WTC11 (cell line): ENCODE measurements at regions of chr9 and their contacts with region 1.

Region 1: DNA sequence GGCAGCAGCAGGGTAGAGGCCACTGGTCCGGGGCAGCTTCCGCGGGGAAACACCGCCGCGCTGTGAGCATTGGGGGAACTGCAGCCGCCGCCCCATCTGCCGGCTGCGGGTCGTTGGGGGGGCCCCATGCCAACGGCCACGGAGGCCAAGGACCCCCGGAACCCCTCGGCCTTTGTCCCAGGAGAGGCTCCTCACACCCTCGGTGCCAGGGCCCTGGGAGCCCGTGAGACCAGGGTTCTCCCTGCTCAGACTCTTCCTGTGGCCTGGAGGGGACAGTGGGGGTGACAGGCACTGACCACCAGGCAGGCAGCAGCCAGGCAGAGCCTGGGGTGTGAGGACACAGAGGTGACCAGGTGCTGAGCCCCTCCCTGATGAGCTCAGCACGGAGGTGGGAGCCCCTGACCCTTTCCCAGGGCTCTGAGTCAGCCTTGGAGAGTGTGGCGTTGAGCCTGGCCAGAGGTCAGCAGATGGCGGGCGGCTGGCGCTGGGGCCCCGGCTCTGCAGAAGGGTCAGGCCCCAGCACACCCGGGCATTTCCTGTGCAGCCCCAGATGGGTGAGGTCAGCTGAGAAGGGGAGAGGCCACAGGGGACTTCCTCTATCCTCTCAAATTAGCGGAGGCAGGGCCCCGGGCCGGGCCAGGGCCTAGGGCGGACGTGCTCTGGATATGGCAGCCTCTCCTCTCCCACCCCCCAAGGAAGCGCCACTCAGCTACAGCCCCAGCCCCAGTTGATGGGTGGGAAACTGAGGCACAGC is 17.9 kb upstream of the EGFL7 start:
- DNase-seq: peak; percentile 82
- ATAC-seq: peak; percentile 87
- H3K4me3 Mint-ChIP-seq: no peak overlapping the region
- H3K27ac Mint-ChIP-seq: no peak overlapping the region
- H3K4me1 Mint-ChIP-seq: no peaks in the 10 kb centered on the region
- H3K27me3 Mint-ChIP-seq: 0 out of 2 replicates have a peak, but pooled peaks cover 6% of the 10 kb centered on the region
- CTCF ChIP-seq: peak; percentile 81

Region 2: GRCh38 chr9:136482793-136483588 is 161.8 kb before region 1 on chr9 and contains the start of gene SEC16A:
- CTCF ChIA-PET with region 1: interaction called, 21 read pairs
- POLR2A ChIA-PET with region 1: no interaction called
- DNase-seq: peak; percentile 99
- ATAC-seq: peak; percentile 78
- H3K4me3 Mint-ChIP-seq: peak within 1 kb of the TSS; percentile 87
- H3K27ac Mint-ChIP-seq: peak within 1 kb of the TSS; percentile 98
- H3K4me1 Mint-ChIP-seq: peaks cover 15% of the 10 kb centered on the region
- H3K27me3 Mint-ChIP-seq: no peaks in the 10 kb centered on the region
- CTCF ChIP-seq: no peak
- total RNA-seq, gene SEC16A: 52.1 to 70.9 TPM (median 52.3 TPM) in 3 replicates

Region 3: GRCh38 chr9:136488247-136489214 is 156.2 kb before region 1 on chr9:
- CTCF ChIA-PET with region 1: interaction called, 21 read pairs
- POLR2A ChIA-PET with region 1: no interaction called
- DNase-seq: peak; percentile 89
- ATAC-seq: peak; percentile 53
- H3K4me3 Mint-ChIP-seq: no peak overlapping the region
- H3K27ac Mint-ChIP-seq: no peak overlapping the region
- H3K4me1 Mint-ChIP-seq: peaks cover 4% of the 10 kb centered on the region
- H3K27me3 Mint-ChIP-seq: no peaks in the 10 kb centered on the region
- CTCF ChIP-seq: peak; percentile 95

Region 4: GRCh38 chr9:136631038-136632000 is 13.5 kb before region 1 on chr9:
- CTCF ChIA-PET with region 1: interaction called, 11 read pairs
- POLR2A ChIA-PET with region 1: no interaction called
- DNase-seq: peak; percentile 78
- ATAC-seq: peak; percentile 57
- H3K4me3 Mint-ChIP-seq: no peak overlapping the region
- H3K27ac Mint-ChIP-seq: no peak overlapping the region
- H3K4me1 Mint-ChIP-seq: no peaks in the 10 kb centered on the region
- H3K27me3 Mint-ChIP-seq: no peaks in the 10 kb centered on the region
- CTCF ChIP-seq: 0 out of 2 replicates have a peak, but pooled peaks have one; percentile 51

Region 5: DNA sequence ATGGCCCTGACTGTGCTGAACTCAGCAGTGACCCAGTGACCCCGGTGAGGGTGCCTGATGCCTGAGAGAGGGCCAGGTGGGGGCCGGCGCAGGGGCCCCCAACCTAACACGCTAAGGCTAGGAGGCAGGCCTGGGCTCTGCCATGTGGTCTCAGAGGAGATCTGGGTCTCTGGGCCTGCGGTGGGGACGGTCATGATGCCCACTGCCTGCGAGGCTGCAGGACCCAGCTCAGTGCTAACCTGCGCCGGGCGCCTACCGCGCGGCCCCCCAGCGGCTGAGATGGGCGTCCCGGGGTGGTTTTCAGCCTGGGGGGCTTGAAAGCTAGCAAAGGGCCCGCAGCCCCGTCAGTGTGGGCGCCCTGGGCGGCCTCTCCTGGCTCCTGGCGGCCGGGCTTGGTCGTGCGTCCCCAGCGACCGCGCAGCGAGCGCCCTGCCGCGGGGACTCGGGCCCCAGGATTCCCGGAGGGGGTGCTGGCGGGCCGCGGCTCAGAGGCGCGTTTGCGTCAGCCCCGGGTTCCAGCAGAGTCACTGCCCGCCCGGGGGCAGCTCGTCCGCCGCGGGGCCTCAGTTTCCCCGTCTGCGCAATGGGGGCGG is 20.4 kb after region 1 on chr9:
- CTCF ChIA-PET with region 1: interaction called, 11 read pairs
- POLR2A ChIA-PET with region 1: no interaction called
- DNase-seq: peak; percentile 43
- ATAC-seq: peak; percentile 38
- H3K4me3 Mint-ChIP-seq: peak overlapping the region; percentile 74
- H3K27ac Mint-ChIP-seq: no peak overlapping the region
- H3K4me1 Mint-ChIP-seq: peaks cover 3% of the 10 kb centered on the region; the same call in 1 of the 2 replicates
- H3K27me3 Mint-ChIP-seq: no peaks in the 10 kb centered on the region; the same call in 1 of the 2 replicates
- CTCF ChIP-seq: no peak

Region 6: DNA sequence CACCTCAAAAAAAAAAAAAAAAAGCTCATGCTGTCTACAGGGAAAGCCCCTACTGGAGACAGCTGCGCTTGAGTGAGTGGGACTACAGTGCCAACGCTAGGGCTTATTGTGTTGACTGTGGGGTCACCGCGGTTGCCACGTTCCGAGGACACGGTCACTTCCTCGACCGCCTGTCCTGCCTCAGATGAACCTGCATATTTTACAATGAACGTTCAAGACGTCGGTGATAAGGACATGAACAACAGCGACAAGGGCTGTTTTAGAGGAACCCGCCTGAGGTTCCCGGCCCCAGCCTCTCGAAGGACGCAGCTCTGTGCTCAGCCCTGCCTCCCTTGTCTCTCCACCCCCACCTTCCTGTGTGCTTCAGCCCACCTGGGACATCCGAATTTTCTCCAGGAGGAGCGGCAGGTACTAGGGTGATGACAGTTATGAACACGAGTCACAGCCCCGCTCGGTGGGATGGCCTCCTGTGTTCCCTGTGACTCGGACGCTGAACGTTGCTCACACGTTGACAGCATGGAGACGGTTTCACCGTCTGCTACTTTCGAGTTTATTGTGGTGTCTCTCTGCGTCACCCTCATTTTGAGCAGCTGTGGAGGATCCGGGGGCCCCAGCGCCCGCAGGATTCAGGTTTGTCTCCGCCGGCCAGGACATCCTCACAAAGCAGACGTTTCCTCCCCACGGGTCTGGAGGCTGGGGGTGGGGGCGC is 56.3 kb after region 1 on chr9:
- CTCF ChIA-PET with region 1: interaction called, 3 read pairs
- POLR2A ChIA-PET with region 1: interaction called, 10 read pairs
- DNase-seq: no peak
- ATAC-seq: peak; percentile 20
- H3K4me3 Mint-ChIP-seq: peak overlapping the region; percentile 60
- H3K27ac Mint-ChIP-seq: no peak overlapping the region
- H3K4me1 Mint-ChIP-seq: peaks cover 4% of the 10 kb centered on the region
- H3K27me3 Mint-ChIP-seq: peaks cover 23% of the 10 kb centered on the region
- CTCF ChIP-seq: no peak

Region 7: DNA sequence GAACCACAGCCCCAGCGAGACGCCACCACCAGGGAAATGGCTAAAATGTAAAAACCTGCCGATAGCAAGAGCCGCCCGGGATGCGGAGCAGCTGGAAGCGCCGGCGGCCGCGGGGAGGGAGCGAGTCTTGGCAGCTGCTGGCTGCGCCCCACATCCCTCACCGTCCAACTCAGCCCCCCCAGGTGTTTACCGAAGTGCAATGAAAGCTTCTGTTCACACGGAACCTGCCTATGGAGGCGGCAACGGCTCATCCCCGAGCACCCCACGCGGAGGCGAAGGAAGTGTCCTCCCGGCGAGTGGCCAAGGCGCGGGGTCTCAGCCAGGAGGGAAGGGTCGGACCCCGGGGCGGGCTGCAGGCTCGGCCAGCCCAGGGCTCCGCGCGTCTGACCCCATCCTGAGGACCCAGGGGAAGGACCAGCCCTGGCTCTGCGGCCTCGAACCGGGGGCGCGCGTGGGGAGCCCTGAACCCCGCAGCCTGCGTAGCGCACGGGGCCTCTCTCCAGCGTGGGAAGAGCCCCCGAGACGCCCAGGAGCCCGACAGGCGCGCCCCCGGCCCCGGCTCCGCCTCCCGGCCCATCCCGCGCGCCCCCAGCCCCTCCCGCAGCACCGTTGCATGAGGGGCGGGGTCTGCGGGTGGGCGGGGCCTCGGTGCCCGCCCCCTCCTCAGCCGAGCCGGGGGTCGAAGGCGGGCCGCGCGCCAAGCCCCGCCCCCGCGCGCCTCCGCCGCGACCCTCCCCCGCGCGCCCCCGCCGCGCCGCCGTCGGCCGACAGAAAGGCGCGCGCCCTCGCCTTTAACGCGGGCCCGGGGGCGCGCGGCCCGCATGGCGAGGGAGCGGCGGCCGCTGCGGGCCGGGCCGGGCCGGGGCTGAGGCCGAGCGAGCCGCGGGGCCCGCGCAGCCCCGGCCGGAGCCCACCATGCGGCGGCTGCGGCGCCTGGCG is 67.2 kb after region 1 on chr9 and contains the start of gene DIPK1B:
- CTCF ChIA-PET with region 1: no interaction called
- POLR2A ChIA-PET with region 1: no interaction called
- DNase-seq: peak; percentile 71
- ATAC-seq: peak; percentile 73
- H3K4me3 Mint-ChIP-seq: peak within 1 kb of the TSS; percentile 70
- H3K27ac Mint-ChIP-seq: no peak within 1 kb of the TSS
- H3K4me1 Mint-ChIP-seq: peaks cover 4% of the 10 kb centered on the region
- H3K27me3 Mint-ChIP-seq: peaks cover 15% of the 10 kb centered on the region
- CTCF ChIP-seq: no peak
- total RNA-seq, gene DIPK1B: 45.4 to 49.8 TPM (median 48.9 TPM) in 3 replicates